Heart left ventricle (tissue), 16 donors: ENCODE measurements at regions of chr13 and their contacts with region 1.

Region 1: DNA sequence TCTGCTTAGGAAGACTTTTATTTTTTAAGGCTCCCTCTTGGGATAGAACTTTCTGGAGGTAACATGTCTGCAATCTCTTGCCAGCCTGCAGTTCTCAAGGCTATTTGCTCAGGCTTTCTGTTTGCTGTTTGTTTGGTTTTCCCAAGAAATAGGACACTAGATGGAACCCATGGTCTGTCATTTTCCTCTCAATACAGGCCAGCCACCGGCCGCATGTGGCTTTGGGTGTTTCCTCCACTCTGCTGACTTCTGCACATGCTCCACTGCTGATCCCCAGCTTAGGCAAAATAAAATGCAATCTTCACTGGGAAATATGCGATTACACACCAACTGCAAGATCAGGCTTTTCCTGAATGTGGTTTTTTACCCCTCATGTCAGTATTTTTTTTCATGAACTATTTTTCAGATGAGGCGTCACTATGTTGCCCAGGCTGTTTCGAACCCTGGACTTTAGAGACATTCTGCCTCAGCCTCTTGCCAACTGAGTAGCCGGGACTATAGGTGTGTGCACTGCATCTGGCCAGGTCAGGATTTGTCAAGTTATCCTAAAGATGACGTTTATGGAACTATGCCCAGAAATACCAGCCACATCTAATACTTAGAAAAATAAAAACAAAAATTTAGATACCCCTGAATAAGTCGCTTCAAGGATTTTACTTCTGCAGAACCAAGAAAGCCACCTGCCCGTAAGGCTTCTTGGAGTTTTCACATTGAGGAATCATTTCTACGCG is 94.3 kb upstream of the PABPC3 start:
- DNase-seq: no peak
- ATAC-seq: no peak
- H3K4me3 ChIP-seq: no peak overlapping the region
- H3K27ac ChIP-seq: no peak overlapping the region
- H3K4me1 ChIP-seq: no peaks in the 10 kb centered on the region
- H3K27me3 ChIP-seq: peaks cover 0 to 26% (median 2%) of the 10 kb centered on the region in 9 donors
- CTCF ChIP-seq: no peak
- POLR2A ChIP-seq: no peak

Region 2: DNA sequence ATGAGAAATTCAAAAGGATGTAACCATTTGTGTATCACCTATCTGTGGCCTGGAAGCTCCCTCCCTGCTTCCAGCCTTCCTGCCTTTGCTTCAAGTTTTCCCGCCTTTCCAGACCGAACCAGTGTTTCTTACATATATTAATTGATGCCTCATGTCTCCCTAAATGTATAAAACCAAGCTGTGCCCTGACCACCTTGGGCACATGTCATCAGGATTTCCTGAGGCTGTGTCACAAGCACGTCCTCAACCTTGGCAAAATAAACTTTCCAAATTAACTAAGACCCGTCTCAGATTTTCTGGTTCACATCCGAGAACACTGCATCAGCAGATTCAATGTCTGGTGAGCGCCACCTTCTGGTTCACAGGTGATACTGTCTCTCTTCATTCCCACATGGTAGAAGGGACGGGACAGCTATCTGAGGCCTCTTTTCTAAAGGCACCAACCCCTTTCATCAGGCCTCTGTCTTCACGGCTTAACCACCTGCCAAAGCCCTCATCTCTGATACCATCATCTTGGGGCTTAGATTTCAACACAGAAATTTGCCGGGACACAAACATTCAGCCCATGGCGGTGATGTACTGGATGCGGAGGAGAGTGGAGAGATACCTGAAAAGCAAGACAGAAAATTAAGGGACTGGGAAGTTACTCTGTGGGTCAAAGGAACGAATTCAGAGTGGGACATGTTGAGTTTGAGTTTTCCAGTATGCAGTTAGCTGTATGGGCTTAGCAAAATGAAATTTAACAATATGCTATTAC is 35.6 kb after region 1 on chr13:
- intact Hi-C with region 1: loop called in 7 of 10 experiments (anchors 1 to 5 kb)
- DNase-seq: peak in 3 of 5 donors; percentile 28 to 46 (median 31)
- ATAC-seq: peak in 3 of 4 donors; percentile 50 to 71 (median 62)
- H3K4me3 ChIP-seq: no peak overlapping the region
- H3K27ac ChIP-seq: no peak overlapping the region
- H3K4me1 ChIP-seq: no peaks in the 10 kb centered on the region
- H3K27me3 ChIP-seq: peaks cover 0 to 53% (median 15%) of the 10 kb centered on the region in 9 donors
- CTCF ChIP-seq: peak; percentile 52 to 78 (median 69)
- POLR2A ChIP-seq: no peak

Region 3: DNA sequence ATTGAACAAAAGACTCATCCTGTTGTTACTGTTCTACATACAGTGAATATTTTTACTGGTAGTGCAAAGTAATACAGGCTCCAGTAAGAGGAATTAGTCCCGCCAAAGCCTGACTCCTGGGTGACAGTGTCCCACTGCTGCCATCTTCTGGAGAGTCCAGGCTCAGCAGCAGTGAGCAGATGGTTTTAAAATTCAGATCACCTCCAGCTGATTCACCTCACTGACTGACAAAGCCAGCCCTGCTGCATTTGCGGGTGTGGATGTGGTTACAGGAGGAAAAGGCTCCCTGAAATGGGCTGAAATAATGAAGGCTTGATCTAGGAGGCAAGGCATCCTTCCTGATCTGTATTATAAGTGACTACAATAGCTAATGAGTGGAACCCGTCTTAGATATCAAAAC is 112.6 kb after region 1 on chr13:
- intact Hi-C with region 1: loop called in 9 of 10 experiments (anchors 5 to 10 kb)
- DNase-seq: peak; percentile 36 to 72 (median 49)
- ATAC-seq: peak in 3 of 4 donors; percentile 62 to 84 (median 82)
- H3K4me3 ChIP-seq: no peak overlapping the region
- H3K27ac ChIP-seq: no peak overlapping the region
- H3K4me1 ChIP-seq: no peaks in the 10 kb centered on the region
- H3K27me3 ChIP-seq: peaks cover 0 to 27% (median 9%) of the 10 kb centered on the region in 9 donors
- CTCF ChIP-seq: peak; percentile 66 to 85 (median 72)
- POLR2A ChIP-seq: no peak

Region 4: DNA sequence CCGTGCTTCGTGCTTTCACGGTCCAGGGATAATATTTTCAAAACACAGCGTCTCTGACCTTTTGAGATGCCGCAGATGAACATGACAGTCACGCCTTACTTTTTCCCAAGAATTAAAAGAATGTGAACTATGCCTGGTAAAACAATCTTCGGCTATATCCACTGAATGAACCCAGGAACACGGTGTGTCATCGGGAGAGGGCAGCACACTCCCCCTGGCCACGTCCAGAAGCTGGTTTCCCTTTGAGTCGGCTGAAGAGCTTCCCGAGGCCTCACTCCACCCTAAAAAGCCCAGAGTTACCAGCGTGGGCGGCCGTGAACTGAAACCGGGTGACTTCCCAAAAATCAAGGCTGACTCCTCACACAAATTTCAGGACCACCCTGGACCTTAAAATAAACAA is 1073.1 kb after region 1 on chr13:
- intact Hi-C with region 1: loop called in 1 of 10 experiments (anchors 5 kb)
- DNase-seq: no peak
- ATAC-seq: peak in 2 of 4 donors; percentile 28 to 44
- H3K4me3 ChIP-seq: no peak overlapping the region
- H3K27ac ChIP-seq: no peak overlapping the region
- H3K4me1 ChIP-seq: no peaks in the 10 kb centered on the region
- H3K27me3 ChIP-seq: peaks cover 0 to 22% (median 4%) of the 10 kb centered on the region in 9 donors
- CTCF ChIP-seq: no peak
- POLR2A ChIP-seq: no peak